ENCODE measurements at regions of chr7 and their contacts with region 1.

Region 1: GRCh38 chr7:100852048-100852872 is at the start of gene SLC12A9:
- DNase-seq: peak; percentile 93

Region 2: DNA sequence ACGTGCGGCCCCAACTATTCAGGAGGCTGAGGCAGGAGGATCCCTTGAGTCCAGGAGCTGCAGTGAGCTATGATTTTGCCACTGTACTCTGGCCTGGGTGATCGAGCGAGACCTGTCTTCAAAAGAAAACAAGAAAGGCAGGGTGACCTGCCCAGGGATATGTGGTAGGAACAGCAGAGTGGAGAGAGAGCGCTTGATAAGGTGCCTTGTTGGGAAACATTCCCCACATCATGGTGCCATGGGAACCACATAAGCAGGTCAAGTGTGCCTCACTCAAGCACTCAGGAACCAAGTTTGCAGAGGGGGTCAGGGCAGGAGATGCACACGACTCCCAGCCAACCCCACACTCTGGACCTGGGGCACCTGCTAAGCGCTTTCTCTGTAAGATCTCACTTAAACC is 595.2 kb before region 1 on chr7:
- CTCF ChIA-PET with region 1: no interaction called
- POLR2A ChIA-PET with region 1: no interaction called
- DNase-seq: no peak

Region 3: DNA sequence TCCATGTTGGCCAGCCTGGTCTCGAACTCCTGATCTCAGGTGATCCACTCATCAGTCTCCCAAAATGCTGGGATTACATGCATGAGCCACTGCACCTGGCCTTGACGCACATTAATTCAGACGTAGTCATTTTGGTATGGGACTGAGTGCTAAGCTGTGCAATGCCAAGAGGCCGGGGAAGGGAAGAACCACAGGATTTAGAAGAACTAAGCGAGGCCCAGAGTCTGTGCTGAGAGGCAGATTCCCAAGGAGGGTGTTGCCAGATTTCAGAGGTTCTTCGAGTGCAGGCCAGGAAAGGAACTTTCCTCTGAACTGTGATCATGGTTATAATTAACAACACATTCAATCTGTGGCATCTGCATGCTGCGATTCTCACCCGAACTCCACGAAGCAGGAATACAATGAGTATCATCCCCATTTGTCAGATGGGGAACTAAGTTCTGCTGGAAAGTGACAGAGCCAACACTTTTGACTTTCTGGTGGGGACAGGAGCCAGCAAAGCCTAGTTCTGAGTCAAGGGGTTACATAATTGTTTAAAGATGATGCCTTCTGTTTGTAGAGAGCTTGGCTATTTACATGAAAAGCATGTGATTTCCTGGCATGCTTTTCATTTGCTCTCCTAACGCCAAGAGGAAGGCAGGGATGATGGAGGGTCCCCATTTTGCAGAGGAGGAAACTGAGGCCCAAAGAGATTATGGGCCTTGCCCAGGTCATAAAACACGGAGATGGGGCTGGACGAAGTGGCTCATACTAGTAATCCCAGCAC is 125.1 kb before region 1 on chr7:
- CTCF ChIA-PET with region 1: interaction called, 11 read pairs
- POLR2A ChIA-PET with region 1: interaction called, 4 read pairs
- DNase-seq: no peak

Region 4: GRCh38 chr7:100803398-100804233 is 48.6 kb before region 1 on chr7:
- CTCF ChIA-PET with region 1: interaction called, 48 read pairs
- POLR2A ChIA-PET with region 1: interaction called, 22 read pairs
- DNase-seq: peak; percentile 39

Region 5: DNA sequence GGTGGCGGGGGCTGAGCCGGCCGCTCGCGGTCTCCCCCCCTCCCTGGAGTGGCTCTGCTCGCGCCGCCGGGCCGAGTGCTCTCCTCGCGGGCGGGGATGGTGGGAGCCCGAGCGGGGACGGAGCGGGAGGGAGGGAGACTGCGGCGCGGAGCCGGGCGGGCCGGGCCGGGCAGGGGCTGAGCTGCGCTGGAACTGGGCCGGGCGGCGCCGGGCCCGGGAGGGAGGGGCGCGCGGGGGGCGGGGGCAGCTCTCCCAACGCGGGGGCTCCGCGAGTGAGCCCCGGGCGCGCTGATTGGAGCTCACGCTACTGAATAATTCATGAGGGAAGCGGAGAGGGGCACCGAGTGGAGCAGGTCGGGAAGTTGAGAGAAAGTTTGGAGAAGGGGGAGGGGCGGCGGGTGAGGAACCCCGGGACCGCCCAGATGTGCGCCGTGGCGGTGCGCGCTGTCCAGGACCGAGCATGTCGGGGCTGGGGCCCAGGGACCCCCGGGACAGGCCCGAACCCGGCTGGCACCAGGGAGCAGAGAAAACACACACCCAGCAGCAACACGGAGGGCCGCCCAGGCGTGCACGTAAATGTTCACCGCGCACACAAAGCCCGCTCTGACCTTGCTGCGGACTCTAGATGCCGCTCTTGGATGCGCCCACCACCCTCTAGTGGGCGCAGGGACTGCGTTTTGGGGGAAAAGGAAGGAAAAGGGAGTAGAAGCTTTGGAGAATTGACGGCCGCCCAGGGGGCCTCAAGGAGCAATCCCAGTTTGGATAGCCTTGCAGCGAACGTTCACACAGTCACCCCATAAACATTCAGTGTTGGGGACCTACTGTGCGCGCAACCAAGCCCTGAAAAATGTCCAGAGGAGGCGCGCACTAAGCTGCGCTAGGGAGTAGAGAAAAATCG is 24.7 kb before region 1 on chr7 and contains the start of gene EPHB4:
- CTCF ChIA-PET with region 1: no interaction called
- POLR2A ChIA-PET with region 1: interaction called, 27 read pairs
- DNase-seq: peak; percentile 85

Region 6: DNA sequence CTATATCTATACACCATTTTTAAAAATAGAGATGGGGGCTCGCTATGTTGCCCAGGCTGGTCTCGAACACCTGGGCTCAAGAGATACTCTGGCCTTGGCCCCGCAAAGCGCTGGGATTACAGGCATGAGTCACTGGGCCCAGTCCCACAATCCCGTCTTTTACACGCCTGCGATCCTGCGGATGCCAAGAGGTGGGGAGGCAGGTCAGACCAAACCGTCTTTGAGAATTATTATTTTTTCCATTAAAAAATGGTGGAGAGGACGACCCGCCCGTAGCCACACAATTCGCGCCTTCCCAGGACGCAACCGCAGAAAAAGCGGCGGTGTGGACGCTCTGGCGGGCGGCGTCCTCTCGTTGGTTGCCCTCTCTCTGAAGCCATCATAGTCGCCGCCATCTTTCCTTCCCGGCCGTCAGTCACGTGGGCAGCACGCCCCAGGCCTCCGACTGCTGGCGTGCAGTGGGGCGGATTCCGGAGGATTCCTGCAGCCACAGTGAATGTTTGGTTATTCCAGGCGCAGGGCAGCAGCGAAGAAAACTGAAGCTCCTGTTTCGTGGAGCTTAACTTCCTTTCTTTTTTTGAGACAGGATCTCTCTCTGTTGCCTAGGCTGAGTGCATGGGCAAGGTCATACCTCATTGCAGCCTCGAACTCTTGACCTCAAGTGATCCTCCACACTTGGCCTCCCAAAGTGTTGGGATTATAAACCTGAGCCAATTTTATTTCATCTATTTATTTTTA is 15.0 kb before region 1 on chr7:
- CTCF ChIA-PET with region 1: interaction called, 9 read pairs
- POLR2A ChIA-PET with region 1: interaction called, 10 read pairs
- DNase-seq: peak; percentile 83

Region 7: DNA sequence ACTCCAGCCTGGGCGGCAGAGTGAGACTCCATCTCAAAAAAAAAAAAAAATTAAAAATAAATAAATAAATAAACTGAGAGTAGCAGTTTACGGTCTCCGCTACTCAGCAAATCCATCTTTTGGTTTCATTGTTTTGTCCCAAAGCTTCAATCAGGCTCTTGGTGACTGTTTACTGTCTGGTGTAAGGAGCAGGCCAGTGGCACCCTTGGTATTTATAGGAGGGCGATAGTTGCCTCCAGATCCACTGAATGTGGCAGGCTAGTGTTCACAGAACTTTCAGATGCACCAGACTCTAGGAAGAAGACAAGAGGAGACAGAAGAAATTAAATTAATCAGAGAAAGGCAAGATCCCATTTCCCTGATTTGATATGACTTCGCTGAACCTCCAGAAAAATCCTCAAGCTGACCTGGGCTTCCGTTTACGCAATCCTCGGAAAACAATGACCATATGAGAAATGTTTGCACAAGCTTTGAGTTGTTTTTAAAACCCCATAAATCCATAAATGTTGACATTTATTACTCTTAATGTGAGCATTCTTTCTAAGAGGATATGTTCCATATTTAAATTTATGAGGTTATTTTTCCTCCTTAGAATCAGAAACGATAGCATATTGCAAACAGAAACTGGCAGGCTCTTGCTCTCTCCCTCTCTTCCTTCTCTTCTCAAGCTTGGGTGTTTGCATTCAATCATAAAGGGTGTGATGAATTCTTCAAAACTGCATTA is 89.9 kb after region 1 on chr7:
- CTCF ChIA-PET with region 1: no interaction called
- POLR2A ChIA-PET with region 1: no interaction called
- DNase-seq: no peak